ENCODE measurements at regions of chr7 and their contacts with region 1.

Region 1: GRCh38 chr7:32318300-32319011 is 171.7 kb downstream of the LSM5 start:
- DNase-seq: no peak
- H3K4me3 ChIP-seq: peak overlapping the region in 1 of 4 donors; percentile 23
- H3K27ac ChIP-seq: no peak overlapping the region
- H3K4me1 ChIP-seq: no peaks in the 10 kb centered on the region
- H3K27me3 ChIP-seq: peaks cover 26% of the 10 kb centered on the region
- CTCF ChIP-seq: no peak
- EP300 ChIP-seq: no peak
- POLR2A ChIP-seq: no peak

Region 2: DNA sequence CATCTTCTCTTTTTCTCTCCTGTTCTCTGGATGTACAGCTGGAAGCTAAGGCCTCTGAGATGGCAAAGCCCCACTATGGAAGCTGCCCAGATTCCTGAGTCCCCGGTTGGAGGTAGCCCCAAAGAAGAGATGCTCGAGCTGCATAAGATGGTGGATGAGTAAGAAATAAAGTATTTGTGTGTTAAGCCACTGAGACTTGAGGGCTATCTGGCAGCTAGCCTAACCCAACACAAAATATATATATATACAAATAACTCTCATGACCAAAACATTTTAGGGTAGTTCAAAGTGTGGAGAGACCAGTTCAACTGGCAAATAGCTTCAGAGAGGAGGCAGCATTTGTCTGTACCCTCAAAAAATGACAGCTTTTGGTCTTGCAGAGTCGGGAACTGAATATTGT is 175.8 kb before region 1 on chr7:
- in situ Hi-C with region 1: no loop called
- intact Hi-C with region 1: no loop called
- DNase-seq: no peak
- H3K4me3 ChIP-seq: no peak overlapping the region
- H3K27ac ChIP-seq: no peak overlapping the region
- H3K4me1 ChIP-seq: no peaks in the 10 kb centered on the region
- H3K27me3 ChIP-seq: no peaks in the 10 kb centered on the region
- CTCF ChIP-seq: no peak
- EP300 ChIP-seq: no peak
- POLR2A ChIP-seq: no peak

Region 3: DNA sequence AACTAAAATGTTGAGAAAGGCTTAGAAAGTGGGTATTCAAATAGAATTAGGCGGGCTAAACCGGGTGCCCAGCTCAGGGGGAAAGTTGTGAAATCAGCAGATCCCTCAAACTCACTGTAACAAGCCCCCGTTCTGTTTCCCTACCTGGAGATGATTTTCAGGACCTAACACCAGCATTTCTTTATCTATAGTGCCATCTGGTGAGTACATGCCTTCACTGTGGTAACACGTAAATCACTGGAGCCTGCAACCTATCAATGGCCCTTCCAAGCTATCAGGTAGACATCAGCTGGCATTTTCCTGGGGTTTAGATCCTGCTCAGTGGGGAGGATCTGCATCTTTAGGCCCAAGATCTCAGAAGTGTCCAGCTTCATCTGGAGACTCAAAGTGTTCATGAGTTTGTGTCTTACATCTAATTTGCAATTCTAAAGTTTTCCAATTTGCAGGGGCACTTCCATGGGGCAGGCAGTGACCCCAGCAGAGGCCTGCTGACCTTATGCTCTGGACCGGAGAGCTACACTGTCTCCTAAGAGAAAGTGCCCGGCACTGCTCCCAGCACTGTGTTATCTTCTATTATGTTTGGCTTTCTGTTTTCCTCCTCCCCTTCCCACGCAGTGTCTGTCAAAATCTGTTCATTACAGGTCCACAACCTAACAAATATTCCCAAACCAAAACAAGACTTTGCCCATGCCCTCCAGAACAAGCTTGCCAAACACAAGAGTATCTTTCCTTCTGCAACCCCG is 39.2 kb after region 1 on chr7:
- in situ Hi-C with region 1: no loop called
- intact Hi-C with region 1: loop called (anchors 2 kb)
- DNase-seq: no peak
- H3K4me3 ChIP-seq: no peak overlapping the region
- H3K27ac ChIP-seq: no peak overlapping the region
- H3K4me1 ChIP-seq: no peaks in the 10 kb centered on the region
- H3K27me3 ChIP-seq: no peaks in the 10 kb centered on the region
- CTCF ChIP-seq: no peak
- EP300 ChIP-seq: no peak
- POLR2A ChIP-seq: no peak

Measured in transverse colon (tissue), 4 donors.